CD4-positive, alpha-beta T cell (primary cell): ENCODE measurements at regions of chr6 and their contacts with region 1.

Region 1: DNA sequence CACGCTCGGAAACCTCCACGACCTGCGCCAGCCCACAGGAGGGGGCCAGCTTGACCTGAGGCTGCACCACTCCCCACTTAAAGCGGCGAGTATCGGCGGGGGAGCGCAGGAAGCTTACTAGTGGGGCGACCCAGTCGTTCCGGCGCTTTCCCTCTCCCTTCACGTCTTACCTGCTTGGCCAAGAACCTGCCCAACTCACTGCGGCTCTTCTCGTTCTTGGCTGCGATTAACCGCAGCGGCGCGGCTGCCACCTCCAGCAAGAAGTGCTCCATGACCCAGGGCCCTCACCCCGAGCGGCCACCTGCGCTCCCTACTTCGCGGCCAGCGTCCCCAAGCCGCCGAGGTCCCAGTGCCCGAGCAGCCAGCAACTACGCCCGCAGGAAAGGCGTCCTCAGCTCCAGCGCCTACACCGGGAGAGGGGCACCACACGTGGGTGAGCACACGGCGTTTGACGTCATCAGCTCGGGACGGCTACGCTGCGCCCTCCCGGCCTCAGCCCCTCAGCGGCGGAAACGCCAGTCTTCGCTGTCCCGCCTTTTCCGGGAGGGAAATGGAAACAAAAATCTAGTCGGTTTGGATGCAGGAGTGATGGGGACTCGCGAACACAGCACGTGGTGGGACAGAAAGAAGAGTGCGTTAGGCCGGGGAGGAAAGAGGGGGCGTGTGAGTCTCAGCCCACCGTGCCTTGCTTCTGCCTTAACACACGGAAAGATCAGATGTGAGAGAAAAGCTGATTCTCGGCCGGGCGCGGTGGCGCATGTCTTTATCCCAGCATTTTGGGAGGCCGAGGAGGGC is at the start of gene MDN1:
- DNase-seq: peak; percentile 67 to 96 (median 82)
- ATAC-seq: peak; percentile 91
- H3K4me3 ChIP-seq: peak within 1 kb of the TSS; percentile 91
- H3K4me3 Mint-ChIP-seq: peak within 1 kb of the TSS; percentile 93
- H3K27ac ChIP-seq: peak within 1 kb of the TSS; percentile 79 to 83
- H3K27ac Mint-ChIP-seq: peak within 1 kb of the TSS; percentile 86
- H3K4me1 ChIP-seq: peaks cover 24% of the 10 kb centered on the region
- H3K4me1 Mint-ChIP-seq: peaks cover 36% of the 10 kb centered on the region
- H3K27me3 ChIP-seq: no peaks in the 10 kb centered on the region
- H3K27me3 Mint-ChIP-seq: no peaks in the 10 kb centered on the region
- CTCF ChIP-seq: no peak
- total RNA-seq, gene MDN1: 40.3 to 40.4 TPM

Region 2: DNA sequence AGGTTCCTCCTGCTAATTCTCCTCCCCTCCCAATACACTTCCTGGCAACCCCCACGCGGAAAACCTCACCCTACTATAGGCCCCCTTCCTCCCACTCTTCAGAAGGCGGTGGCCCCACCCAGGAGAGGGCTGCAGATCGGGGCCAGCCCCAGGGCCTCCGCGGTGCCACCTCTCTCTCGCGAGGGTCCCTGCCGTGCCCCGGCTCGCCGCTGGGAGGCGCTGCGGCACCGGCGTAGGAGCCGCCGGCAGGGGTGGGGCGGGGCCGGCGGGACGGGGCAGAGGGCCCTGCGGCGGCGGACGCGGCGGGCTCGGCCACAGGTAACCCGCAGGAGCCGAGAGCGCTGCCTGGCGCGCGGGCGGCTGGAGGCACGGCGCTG is 386.7 kb before region 1 on chr6 and contains the start of gene ANKRD6:
- CTCF ChIA-PET with region 1: no interaction called
- POLR2A ChIA-PET with region 1: no interaction called
- intact Hi-C with region 1: loop called in 1 of 2 experiments (anchors 10 kb)
- DNase-seq: peak; percentile 57 to 90 (median 78)
- ATAC-seq: peak; percentile 94
- H3K4me3 ChIP-seq: peak within 1 kb of the TSS; percentile 73
- H3K4me3 Mint-ChIP-seq: peak within 1 kb of the TSS; percentile 98
- H3K27ac ChIP-seq: peak within 1 kb of the TSS in 1 of 2 donors; percentile 37
- H3K27ac Mint-ChIP-seq: peak within 1 kb of the TSS; percentile 73
- H3K4me1 ChIP-seq: peaks cover 15% of the 10 kb centered on the region
- H3K4me1 Mint-ChIP-seq: peaks cover 35% of the 10 kb centered on the region
- H3K27me3 ChIP-seq: no peaks in the 10 kb centered on the region
- H3K27me3 Mint-ChIP-seq: no peaks in the 10 kb centered on the region
- CTCF ChIP-seq: peak; percentile 69
- total RNA-seq, gene ANKRD6: 3.8 to 4.8 TPM

Region 3: DNA sequence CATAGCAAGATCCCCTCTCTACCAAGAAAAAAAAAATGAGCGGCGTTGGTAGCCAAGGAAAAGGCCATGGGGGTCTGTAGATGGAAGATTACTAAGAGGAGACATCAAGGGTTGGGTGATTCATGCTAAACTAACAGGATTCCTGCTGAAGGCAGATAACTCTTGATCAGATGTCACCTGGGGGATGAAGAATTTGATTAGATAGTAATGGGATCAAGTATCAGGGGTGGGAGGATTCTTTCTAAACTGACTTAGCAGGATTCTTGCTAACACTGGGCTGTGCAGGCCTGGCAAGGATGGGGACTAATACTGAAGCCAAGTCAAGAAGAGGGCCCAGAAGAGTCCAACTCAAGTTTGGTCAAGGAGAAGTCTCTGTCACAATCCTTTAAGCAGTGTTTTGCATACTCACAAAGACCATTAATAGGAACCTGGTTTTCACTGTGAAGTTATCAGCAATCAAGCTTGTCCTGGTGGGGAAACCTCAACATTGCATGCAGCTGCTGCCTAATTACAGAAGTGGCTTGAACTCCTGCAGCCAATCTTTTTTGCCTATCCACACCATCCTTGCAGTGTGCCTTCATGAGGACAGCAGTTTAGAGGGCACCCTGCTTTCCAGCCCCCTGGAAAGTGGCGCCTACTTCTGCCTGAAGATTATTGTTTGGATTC is 325.3 kb before region 1 on chr6:
- CTCF ChIA-PET with region 1: no interaction called
- POLR2A ChIA-PET with region 1: no interaction called
- intact Hi-C with region 1: no loop called
- DNase-seq: no peak
- ATAC-seq: no peak
- H3K4me3 ChIP-seq: no peak overlapping the region
- H3K4me3 Mint-ChIP-seq: no peak overlapping the region
- H3K27ac ChIP-seq: no peak overlapping the region
- H3K27ac Mint-ChIP-seq: no peak overlapping the region
- H3K4me1 ChIP-seq: no peaks in the 10 kb centered on the region
- H3K4me1 Mint-ChIP-seq: no peaks in the 10 kb centered on the region
- H3K27me3 ChIP-seq: no peaks in the 10 kb centered on the region
- H3K27me3 Mint-ChIP-seq: no peaks in the 10 kb centered on the region
- CTCF ChIP-seq: no peak

Region 4: GRCh38 chr6:89638320-89639195 is 181.0 kb before region 1 on chr6 and contains the start of gene LYRM2:
- CTCF ChIA-PET with region 1: no interaction called
- POLR2A ChIA-PET with region 1: interaction called, 6 read pairs
- intact Hi-C with region 1: loop called in 1 of 2 experiments (anchors 5 kb)
- DNase-seq: peak; percentile 80 to 95 (median 86)
- ATAC-seq: peak; percentile 95
- H3K4me3 ChIP-seq: peak within 1 kb of the TSS; percentile 93
- H3K4me3 Mint-ChIP-seq: peak within 1 kb of the TSS; percentile 97
- H3K27ac ChIP-seq: peak within 1 kb of the TSS; percentile 92 to 99
- H3K27ac Mint-ChIP-seq: peak within 1 kb of the TSS; percentile 98
- H3K4me1 ChIP-seq: peaks cover 15% of the 10 kb centered on the region
- H3K4me1 Mint-ChIP-seq: peaks cover 35% of the 10 kb centered on the region
- H3K27me3 ChIP-seq: no peaks in the 10 kb centered on the region
- H3K27me3 Mint-ChIP-seq: no peaks in the 10 kb centered on the region
- CTCF ChIP-seq: no peak
- total RNA-seq, gene LYRM2: 12.3 to 16.3 TPM

Region 5: GRCh38 chr6:89829591-89830385 is 10.3 kb after region 1 on chr6 and contains the start of gene CASP8AP2:
- CTCF ChIA-PET with region 1: interaction called, 11 read pairs
- POLR2A ChIA-PET with region 1: interaction called, 100 read pairs
- intact Hi-C with region 1: loop called in 1 of 2 experiments (anchors 1 kb)
- DNase-seq: peak; percentile 86 to 99 (median 92)
- ATAC-seq: peak; percentile 93
- H3K4me3 ChIP-seq: peak within 1 kb of the TSS; percentile 100
- H3K4me3 Mint-ChIP-seq: peak within 1 kb of the TSS; percentile 94
- H3K27ac ChIP-seq: peak within 1 kb of the TSS; percentile 68 to 86
- H3K27ac Mint-ChIP-seq: peak within 1 kb of the TSS; percentile 91
- H3K4me1 ChIP-seq: peaks cover 33% of the 10 kb centered on the region
- H3K4me1 Mint-ChIP-seq: peaks cover 35% of the 10 kb centered on the region
- H3K27me3 ChIP-seq: no peaks in the 10 kb centered on the region
- H3K27me3 Mint-ChIP-seq: no peaks in the 10 kb centered on the region
- CTCF ChIP-seq: no peak
- total RNA-seq, gene CASP8AP2: 17.3 to 20.0 TPM

Region 6: DNA sequence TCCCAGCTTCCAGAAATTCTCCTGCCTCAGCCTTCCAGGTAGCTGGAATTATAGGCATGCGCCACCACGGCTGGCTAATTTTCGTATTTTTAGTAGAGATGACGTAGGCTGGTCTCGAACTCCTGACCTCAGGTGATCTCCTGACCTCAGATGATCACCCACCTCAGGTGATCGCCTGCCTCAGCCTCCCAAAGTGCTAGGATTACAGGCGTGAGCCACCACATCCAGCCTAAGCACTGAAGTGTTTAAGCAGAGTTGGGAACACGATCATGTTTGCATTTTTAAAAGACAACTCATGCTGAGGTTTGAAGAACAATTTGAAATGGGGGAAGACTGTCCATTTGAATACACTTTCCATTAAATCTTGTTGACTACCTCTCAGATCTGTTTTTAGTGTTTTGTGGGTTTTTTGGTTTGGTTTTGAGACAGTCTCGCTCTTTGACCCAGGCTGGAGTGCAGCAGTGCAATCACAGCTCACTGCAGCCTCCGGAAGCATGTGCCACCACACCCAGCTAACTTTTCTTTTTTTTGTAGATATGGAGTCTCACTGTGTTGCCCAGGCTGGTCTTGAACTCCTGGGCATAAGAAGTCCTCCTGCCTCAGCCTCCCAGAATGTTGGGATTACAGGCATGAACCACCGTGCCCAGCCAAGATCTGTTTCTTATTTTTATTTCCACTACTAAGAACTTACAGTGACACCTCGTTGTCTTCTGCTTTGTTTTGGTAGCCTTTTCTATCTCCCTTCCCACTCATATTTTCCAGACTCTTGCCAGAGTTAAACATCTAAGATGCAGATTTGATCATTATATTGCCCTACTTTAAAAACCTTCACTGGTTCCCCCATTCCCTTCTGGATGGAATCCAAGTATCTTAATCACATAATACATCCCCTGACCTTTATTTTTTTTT is 15.6 kb after region 1 on chr6:
- CTCF ChIA-PET with region 1: interaction called, 3 read pairs
- POLR2A ChIA-PET with region 1: interaction called, 15 read pairs
- intact Hi-C with region 1: no loop called
- DNase-seq: peak in 12 of 14 experiments; percentile 19 to 73 (median 42)
- ATAC-seq: peak; percentile 79
- H3K4me3 ChIP-seq: peak overlapping the region; percentile 29
- H3K4me3 Mint-ChIP-seq: peak overlapping the region; percentile 72
- H3K27ac ChIP-seq: peak overlapping the region; percentile 56 to 87
- H3K27ac Mint-ChIP-seq: peak overlapping the region; percentile 90
- H3K4me1 ChIP-seq: peaks cover 65% of the 10 kb centered on the region
- H3K4me1 Mint-ChIP-seq: peaks cover 66% of the 10 kb centered on the region
- H3K27me3 ChIP-seq: no peaks in the 10 kb centered on the region
- H3K27me3 Mint-ChIP-seq: no peaks in the 10 kb centered on the region
- CTCF ChIP-seq: no peak

Region 7: DNA sequence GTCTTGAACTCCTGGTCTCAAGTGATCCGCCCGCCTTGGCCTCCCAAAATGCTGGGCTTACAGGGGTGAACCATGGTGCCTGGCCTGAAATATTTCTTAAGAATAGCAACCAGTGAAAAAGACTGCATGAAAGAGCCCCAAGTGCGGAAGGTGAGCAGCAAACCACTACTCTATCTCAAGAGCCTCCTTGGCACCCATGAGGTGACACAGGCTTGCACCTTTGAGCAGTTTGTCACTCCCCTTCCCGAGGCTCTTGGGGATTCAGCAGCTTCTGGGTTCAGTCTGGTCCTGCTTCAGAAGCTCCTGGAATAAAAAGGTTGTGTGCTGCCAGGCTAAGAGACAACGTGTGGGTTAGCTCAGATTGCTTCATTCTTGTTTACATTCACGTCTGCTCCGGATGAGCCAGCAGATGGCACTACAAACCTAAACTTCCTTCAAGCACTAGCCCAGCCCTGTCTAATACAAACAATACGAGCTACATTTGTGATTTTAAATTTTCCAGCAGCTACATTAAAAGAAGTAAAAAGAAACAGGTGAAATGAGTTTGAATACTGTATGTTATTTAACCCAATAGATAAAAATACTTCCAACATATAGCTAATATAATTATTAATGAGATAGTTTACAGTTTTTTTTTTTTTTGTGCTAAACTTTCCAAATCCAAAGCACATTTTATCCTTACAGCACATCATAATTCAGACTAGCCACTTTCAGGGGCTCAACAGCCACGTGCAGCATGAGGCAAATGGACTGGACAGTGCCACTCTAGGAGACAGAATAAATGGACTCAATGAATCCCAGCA is 120.9 kb after region 1 on chr6:
- CTCF ChIA-PET with region 1: no interaction called
- POLR2A ChIA-PET with region 1: no interaction called
- intact Hi-C with region 1: loop called in 1 of 2 experiments (anchors 5 kb)
- DNase-seq: peak; percentile 47 to 87 (median 65)
- ATAC-seq: peak; percentile 95
- H3K4me3 ChIP-seq: no peak overlapping the region
- H3K4me3 Mint-ChIP-seq: no peak overlapping the region
- H3K27ac ChIP-seq: no peak overlapping the region
- H3K27ac Mint-ChIP-seq: peak overlapping the region; percentile 67
- H3K4me1 ChIP-seq: peaks cover 8% of the 10 kb centered on the region
- H3K4me1 Mint-ChIP-seq: peaks cover 41% of the 10 kb centered on the region
- H3K27me3 ChIP-seq: no peaks in the 10 kb centered on the region
- H3K27me3 Mint-ChIP-seq: no peaks in the 10 kb centered on the region
- CTCF ChIP-seq: peak; percentile 89

Region 8: GRCh38 chr6:90586836-90587638 is 767.5 kb after region 1 on chr6 and contains the start of gene MAP3K7:
- CTCF ChIA-PET with region 1: interaction called, 3 read pairs
- POLR2A ChIA-PET with region 1: no interaction called
- intact Hi-C with region 1: loop called (anchors 10 kb)
- DNase-seq: peak; percentile 80 to 97 (median 92)
- ATAC-seq: peak; percentile 85
- H3K4me3 ChIP-seq: peak within 1 kb of the TSS; percentile 94
- H3K4me3 Mint-ChIP-seq: peak within 1 kb of the TSS; percentile 98
- H3K27ac ChIP-seq: peak within 1 kb of the TSS; percentile 97 to 99
- H3K27ac Mint-ChIP-seq: peak within 1 kb of the TSS; percentile 96
- H3K4me1 ChIP-seq: peaks cover 15% of the 10 kb centered on the region
- H3K4me1 Mint-ChIP-seq: peaks cover 50% of the 10 kb centered on the region
- H3K27me3 ChIP-seq: peaks cover 0 to 9% of the 10 kb centered on the region in 2 experiments
- H3K27me3 Mint-ChIP-seq: peaks cover 9% of the 10 kb centered on the region
- CTCF ChIP-seq: no peak
- total RNA-seq, gene MAP3K7: 9.0 to 9.3 TPM